Caco-2 (cell line): ENCODE measurements at regions of chr5 and their contacts with region 1.

Region 1: GRCh38 chr5:168346441-168346840 is 55.0 kb downstream of the WWC1 start:
- DNase-seq: peak; percentile 79 to 80
- H3K4me3 ChIP-seq: no peak overlapping the region
- H3K4me3 Mint-ChIP-seq: peak overlapping the region; percentile 71
- H3K27ac Mint-ChIP-seq: peak overlapping the region; percentile 92
- H3K4me1 ChIP-seq: peaks cover 81% of the 10 kb centered on the region
- H3K4me1 Mint-ChIP-seq: peaks cover 74% of the 10 kb centered on the region
- H3K27me3 ChIP-seq: no peaks in the 10 kb centered on the region
- H3K27me3 Mint-ChIP-seq: no peaks in the 10 kb centered on the region
- CTCF ChIP-seq: no peak

Region 2: DNA sequence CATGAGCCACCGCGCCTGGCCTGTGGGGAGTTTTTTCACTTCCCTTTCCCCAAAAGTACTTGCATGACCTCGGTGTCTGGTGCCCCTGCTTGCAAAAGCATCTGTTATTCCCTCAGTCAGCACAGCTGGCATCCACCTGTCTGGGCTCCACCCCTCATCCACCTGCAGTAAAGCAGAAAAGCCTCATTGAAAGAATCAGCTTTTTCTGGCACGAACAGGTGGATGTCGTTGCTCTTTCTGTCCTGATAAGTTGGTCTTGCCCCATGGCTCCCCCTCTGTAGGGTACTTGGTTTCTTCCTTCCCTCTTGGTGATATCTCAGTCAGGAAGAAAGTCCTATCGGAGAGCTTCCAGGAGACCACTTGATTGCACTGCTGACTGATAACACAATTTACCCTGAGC is 17.6 kb before region 1 on chr5:
- CTCF ChIA-PET with region 1: interaction called, 4 read pairs
- POLR2A ChIA-PET with region 1: no interaction called
- intact Hi-C with region 1: loop called (anchors 1 kb)
- DNase-seq: peak; percentile 95 to 96
- H3K4me3 ChIP-seq: no peak overlapping the region
- H3K4me3 Mint-ChIP-seq: peak overlapping the region; percentile 57
- H3K27ac Mint-ChIP-seq: peak overlapping the region; percentile 88
- H3K4me1 ChIP-seq: peaks cover 83% of the 10 kb centered on the region
- H3K4me1 Mint-ChIP-seq: peaks cover 78% of the 10 kb centered on the region
- H3K27me3 ChIP-seq: no peaks in the 10 kb centered on the region
- H3K27me3 Mint-ChIP-seq: no peaks in the 10 kb centered on the region
- CTCF ChIP-seq: no peak

Region 3: GRCh38 chr5:168359832-168360460 is 13.5 kb after region 1 on chr5:
- CTCF ChIA-PET with region 1: interaction called, 10 read pairs
- POLR2A ChIA-PET with region 1: interaction called, 4 read pairs
- intact Hi-C with region 1: loop called (anchors 1 kb)
- DNase-seq: peak; percentile 83 to 87
- H3K4me3 ChIP-seq: no peak overlapping the region
- H3K4me3 Mint-ChIP-seq: peak overlapping the region; percentile 29
- H3K27ac Mint-ChIP-seq: peak overlapping the region; percentile 78
- H3K4me1 ChIP-seq: peaks cover 73% of the 10 kb centered on the region
- H3K4me1 Mint-ChIP-seq: peaks cover 72% of the 10 kb centered on the region
- H3K27me3 ChIP-seq: no peaks in the 10 kb centered on the region
- H3K27me3 Mint-ChIP-seq: no peaks in the 10 kb centered on the region
- CTCF ChIP-seq: no peak